Right ventricle myocardium inferior (tissue), 1 donor: ENCODE measurements at regions of chr6 and their contacts with region 1.

Region 1: GRCh38 chr6:160028487-160029275 is 59.8 kb downstream of the IGF2R start:
- DNase-seq: no peak
- ATAC-seq: no peak

Region 2: DNA sequence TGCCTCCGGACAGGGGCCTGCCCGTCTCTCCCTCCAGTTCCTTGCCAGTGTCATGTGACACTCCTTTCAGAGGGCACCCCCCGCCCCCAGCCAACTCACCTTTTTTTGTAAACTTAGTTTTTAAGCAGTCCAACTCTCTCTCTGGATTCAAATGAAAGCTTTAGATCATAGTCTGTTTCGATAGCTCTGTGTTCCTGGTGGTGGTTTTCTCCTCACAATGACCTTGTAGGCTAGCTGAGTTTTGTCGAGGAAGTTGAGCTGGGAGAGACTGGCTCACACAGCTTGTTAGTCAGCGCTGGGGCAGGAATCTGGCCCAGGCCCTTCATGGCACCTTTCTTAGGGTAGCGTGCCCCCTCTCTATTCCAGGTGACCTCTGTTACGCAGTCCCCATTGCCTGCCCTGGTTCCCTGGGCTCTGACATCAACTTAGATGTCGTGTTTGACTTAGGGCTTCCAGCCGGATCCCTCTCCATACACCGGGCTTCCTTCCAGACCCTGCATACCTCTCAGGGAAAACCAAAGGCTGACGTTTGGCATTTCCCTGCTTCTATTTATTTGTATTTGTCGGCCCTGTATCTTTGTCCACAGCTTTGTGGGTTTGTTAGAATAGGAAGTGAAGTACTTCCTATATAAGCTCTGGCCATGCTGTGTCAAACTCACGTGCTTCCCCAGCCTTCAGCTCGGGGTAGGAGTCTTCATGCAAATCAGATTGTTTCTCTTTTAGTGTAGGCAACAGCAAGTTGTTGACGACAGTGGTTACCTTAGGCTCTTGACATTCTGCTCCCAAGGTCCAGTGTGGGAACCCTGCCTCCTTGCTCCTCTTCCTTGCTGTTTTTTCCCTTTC is 47.1 kb before region 1 on chr6:
- intact Hi-C with region 1: loop called (anchors 5 kb)
- DNase-seq: peak; percentile 73
- ATAC-seq: peak; percentile 12